ENCODE measurements at regions of chrX and their contacts with region 1.

Region 1: DNA sequence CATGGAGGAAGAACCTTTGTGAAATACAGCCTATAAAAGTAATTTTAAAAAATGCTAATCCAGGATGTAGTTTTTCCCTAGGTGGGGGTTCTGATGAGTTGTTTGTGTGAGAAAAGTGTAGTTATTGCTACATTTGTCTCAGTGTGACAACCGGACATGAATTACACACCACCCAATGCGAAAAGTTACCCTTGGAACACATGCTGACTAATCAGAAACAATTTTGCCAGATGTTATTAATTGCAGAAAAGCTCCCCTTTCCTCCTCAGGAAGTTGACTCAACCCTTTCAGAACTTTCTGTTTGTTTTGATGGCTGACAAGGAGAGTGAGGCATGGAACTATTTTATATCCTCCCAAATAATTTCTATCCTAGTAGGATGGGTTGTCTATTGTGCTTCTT is 38.1 kb upstream of the EDA2R start:
- DNase-seq: no peak
- ATAC-seq: no peak
- H3K4me3 ChIP-seq: no peak overlapping the region
- H3K27ac ChIP-seq: peak overlapping the region in 1 of 10 donors; percentile 43
- H3K4me1 ChIP-seq: no peaks in the 10 kb centered on the region
- H3K27me3 ChIP-seq: peaks cover 0 to 19% (median 0%) of the 10 kb centered on the region in 7 donors
- CTCF ChIP-seq: no peak

Region 2: DNA sequence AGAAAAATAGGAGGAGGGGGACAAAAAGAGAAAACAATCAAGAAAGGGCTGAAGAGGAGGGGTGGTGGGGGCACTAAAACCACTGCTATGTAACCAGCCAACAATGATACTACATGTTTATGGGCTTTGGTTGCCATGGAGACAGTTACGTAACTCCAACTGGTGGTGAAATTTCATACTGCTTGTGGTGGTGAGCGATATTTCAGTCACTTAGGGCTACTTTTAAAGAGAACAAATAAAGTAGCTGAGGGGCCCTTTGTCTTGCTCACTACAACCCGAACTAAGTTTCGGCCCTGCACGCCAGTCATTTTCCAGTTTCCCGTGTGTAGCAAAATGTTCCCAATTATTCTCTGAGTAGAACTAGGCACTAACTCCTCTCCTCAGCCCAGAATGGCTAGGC is 237.1 kb after region 1 on chrX:
- intact Hi-C with region 1: no loop called
- DNase-seq: no peak
- ATAC-seq: no peak
- H3K4me3 ChIP-seq: no peak overlapping the region
- H3K27ac ChIP-seq: no peak overlapping the region
- H3K4me1 ChIP-seq: no peaks in the 10 kb centered on the region
- H3K27me3 ChIP-seq: peaks cover 0 to 5% (median 0%) of the 10 kb centered on the region in 7 donors
- CTCF ChIP-seq: no peak

Region 3: GRCh38 chrX:66931713-66932112 is 254.7 kb after region 1 on chrX:
- intact Hi-C with region 1: loop called in 1 of 10 experiments (anchors 5 kb)
- DNase-seq: no peak
- ATAC-seq: no peak
- H3K4me3 ChIP-seq: no peak overlapping the region
- H3K27ac ChIP-seq: no peak overlapping the region
- H3K4me1 ChIP-seq: no peaks in the 10 kb centered on the region
- H3K27me3 ChIP-seq: no peaks in the 10 kb centered on the region
- CTCF ChIP-seq: no peak